Adrenal gland (tissue), 19 donors: ENCODE measurements at regions of chr12 and their contacts with region 1.

Region 1: DNA sequence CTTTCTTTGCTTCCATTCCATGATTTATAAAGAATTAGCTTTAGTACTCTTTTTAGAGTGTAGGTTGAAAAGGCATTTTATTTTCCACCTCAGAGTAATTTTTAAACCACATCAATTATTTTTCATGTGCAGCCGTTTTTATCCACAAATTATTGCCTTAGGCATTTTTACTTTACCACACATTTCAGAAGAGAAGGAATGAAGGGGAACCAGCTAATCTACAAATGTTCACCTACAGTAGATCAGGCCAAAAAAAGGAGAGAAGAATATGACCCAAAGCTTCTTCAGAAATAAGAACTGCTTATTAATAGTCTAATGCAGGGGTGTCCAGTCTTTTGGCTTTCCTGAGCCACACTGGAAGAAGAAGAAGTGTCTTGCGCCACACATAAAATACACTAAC is 19.8 kb upstream of the NTN4 start:
- DNase-seq: no peak
- H3K4me3 ChIP-seq: no peak overlapping the region
- H3K27ac ChIP-seq: no peak overlapping the region
- H3K4me1 ChIP-seq: no peaks in the 10 kb centered on the region
- H3K27me3 ChIP-seq: no peaks in the 10 kb centered on the region
- CTCF ChIP-seq: no peak
- POLR2A ChIP-seq: no peak

Region 2: DNA sequence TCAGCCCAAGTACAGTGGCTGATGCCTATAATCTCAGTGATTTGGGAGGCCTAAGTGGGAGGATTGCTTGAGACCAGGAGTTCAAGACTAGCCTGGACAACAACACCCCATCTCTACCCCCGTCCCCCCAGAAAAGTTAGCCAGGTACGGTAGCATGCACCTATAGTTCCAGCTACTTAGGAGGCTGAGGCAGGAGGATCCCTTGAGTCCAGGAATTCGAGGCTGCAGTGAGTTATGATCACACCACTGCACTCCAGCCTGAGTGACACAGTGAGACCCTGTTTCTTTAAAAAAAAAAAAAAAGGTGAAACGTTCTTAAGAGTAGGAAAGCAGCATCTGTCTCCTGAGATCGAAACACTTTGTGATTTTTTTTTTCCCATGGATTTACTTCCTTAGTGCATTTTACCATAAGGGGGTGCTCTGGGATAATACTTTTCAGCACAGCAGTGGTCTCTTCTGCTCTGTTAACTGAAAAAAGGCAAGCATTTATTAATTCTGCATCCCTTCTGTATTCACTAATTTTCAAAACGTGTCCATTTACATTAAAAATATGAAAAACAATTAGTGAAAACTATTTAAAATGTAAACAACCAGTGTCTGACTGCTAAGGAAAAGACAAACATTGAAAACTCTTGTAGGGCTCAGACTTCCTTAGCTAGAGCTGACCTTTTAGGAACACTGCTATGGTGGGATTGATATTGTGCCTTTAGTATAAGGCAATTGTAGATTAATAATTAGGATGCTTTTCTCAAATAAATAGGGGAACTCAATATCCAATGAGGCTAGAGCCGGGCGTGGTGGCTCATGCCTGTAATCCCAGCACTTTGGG is 228.0 kb before region 1 on chr12:
- intact Hi-C with region 1: loop called (anchors 5 to 10 kb)
- DNase-seq: no peak
- H3K4me3 ChIP-seq: no peak overlapping the region
- H3K27ac ChIP-seq: no peak overlapping the region
- H3K4me1 ChIP-seq: no peaks in the 10 kb centered on the region
- H3K27me3 ChIP-seq: peaks cover 4% of the 10 kb centered on the region
- CTCF ChIP-seq: peak; percentile 12 to 53 (median 45)
- POLR2A ChIP-seq: no peak

Region 3: DNA sequence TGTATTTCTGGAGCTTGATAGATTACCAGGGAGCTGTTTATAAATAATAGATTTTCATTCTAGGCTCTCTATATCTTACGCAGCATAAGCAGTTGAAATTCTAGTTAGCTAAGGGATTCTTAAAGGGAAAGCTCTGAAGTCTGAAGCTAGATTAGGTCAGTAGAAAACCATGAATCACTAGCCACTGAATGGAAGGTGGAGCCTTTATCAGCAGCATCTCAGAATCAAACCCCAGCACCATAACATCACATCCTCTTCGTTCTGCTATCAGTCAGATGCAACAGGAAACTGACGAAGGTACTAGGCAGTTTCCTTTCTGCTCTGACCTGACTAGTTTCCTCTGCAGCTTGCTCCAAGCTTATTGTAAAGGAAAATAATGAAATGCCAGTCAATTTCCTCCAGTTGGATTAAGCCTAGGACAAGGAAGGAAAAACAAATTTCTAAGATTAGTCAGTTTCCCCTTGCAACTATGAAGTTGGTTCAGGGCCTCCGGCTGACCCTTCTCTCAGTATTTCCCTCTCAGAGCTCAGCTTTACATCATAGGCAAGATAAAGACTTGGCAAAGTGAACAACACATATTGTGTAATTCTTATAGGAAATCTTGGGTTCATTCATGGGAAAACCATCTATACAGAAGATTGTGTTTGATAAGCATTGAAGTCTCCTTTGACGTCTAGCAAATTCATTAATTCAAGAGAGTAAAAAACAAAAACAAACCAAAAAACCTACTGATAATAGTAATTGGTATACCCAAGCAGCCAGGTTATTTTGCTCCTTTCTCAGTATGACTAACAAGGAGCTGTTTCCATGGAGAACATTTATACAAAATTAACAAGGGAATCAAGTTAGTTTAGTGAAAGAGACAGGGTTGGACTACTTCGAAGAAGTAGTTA is 635.5 kb after region 1 on chr12:
- intact Hi-C with region 1: no loop called
- DNase-seq: peak in 2 of 7 donors; percentile 19 to 53
- H3K4me3 ChIP-seq: no peak overlapping the region
- H3K27ac ChIP-seq: peak overlapping the region in 2 of 5 donors; percentile 35 to 52
- H3K4me1 ChIP-seq: no peaks in the 10 kb centered on the region
- H3K27me3 ChIP-seq: no peaks in the 10 kb centered on the region
- CTCF ChIP-seq: no peak
- POLR2A ChIP-seq: no peak